Vagina (tissue), 2 donors: ENCODE measurements at regions of chr11 and their contacts with region 1.

Region 1: GRCh38 chr11:107526197-107526596 is 39.3 kb downstream of the ALKBH8 start:
- DNase-seq: no peak
- H3K4me3 ChIP-seq: no peak overlapping the region
- H3K27ac ChIP-seq: no peak overlapping the region
- H3K4me1 ChIP-seq: no peaks in the 10 kb centered on the region
- H3K27me3 ChIP-seq: no peaks in the 10 kb centered on the region
- CTCF ChIP-seq: no peak
- POLR2A ChIP-seq: no peak

Region 2: GRCh38 chr11:107184986-107185385 is 341.2 kb before region 1 on chr11:
- intact Hi-C with region 1: loop called (anchors 5 kb)
- DNase-seq: no peak
- H3K4me3 ChIP-seq: no peak overlapping the region
- H3K27ac ChIP-seq: no peak overlapping the region
- H3K4me1 ChIP-seq: no peaks in the 10 kb centered on the region
- H3K27me3 ChIP-seq: no peaks in the 10 kb centered on the region
- CTCF ChIP-seq: no peak
- POLR2A ChIP-seq: no peak